Right ventricle myocardium inferior (tissue), 1 donor: ENCODE measurements at regions of chr13 and their contacts with region 1.

Region 1: GRCh38 chr13:51475727-51476501 is 23.1 kb upstream of the INTS6 start:
- DNase-seq: no peak
- ATAC-seq: no peak

Region 2: DNA sequence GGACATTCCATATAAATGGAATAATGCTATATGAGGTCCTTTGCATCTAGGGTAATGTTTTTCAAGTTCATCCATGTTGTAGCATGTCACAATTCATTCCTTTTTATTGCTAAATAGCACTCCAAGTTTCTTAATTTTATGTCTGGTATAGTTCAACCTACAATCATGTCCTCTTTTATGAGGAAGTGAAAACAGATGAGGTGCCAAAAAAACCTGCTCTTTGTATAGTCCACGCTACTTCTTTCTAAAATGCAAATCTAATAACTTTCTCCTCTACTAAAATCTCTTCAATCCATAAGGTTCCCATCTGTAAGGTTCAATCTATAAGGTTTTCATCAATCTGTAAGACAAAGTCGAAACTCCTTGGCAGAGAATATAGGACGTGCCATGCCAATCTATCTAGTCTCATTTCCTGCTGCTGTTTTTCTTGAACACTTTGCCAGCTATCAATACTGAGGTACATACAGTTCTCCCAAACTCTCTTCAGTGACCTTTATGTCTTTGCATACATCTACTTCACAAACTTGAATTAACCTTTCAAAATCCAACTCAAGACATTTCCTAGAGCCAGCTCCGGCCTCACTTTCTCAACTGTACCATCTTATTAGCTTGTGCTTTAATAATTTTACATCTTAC is 56.8 kb before region 1 on chr13:
- intact Hi-C with region 1: no loop called
- DNase-seq: no peak
- ATAC-seq: no peak

Region 3: DNA sequence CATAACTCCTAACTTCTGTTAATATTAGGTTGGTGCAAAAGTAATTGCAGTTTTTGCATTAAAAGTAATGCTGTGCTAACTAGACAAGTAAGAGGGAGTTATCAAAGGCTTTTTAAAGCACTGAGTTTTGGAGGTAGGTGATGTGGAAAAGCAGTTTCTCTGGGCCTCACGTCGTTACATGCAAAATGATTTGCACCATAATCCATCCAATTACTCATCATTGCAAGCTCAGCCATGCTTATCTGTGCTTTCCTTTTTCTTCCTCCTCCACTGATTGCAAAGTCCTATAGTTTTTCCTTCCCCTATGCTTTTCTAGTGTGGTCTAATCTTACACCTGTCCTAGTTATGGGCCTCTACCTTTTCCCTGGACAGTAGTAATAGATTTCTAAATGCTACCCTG is 12.3 kb after region 1 on chr13:
- intact Hi-C with region 1: loop called (anchors 1 kb)
- DNase-seq: no peak
- ATAC-seq: no peak